Activated B cell treated with CpG ODN at 0.5 μM for 24 hours (primary cell): ENCODE measurements at regions of chr4 and their contacts with region 1.

Region 1: GRCh38 chr4:48779998-48780742 is at the start of gene FRYL:
- DNase-seq: peak; percentile 86
- ATAC-seq: peak; percentile 91
- H3K4me3 Mint-ChIP-seq: peak within 1 kb of the TSS; percentile 94
- H3K27ac Mint-ChIP-seq: peak within 1 kb of the TSS; percentile 87
- H3K4me1 Mint-ChIP-seq: peaks cover 41% of the 10 kb centered on the region
- H3K27me3 Mint-ChIP-seq: no peaks in the 10 kb centered on the region
- CTCF ChIP-seq: no peak
- total RNA-seq, gene FRYL: 82.4 and 91.5 TPM in 2 replicates

Region 2: DNA sequence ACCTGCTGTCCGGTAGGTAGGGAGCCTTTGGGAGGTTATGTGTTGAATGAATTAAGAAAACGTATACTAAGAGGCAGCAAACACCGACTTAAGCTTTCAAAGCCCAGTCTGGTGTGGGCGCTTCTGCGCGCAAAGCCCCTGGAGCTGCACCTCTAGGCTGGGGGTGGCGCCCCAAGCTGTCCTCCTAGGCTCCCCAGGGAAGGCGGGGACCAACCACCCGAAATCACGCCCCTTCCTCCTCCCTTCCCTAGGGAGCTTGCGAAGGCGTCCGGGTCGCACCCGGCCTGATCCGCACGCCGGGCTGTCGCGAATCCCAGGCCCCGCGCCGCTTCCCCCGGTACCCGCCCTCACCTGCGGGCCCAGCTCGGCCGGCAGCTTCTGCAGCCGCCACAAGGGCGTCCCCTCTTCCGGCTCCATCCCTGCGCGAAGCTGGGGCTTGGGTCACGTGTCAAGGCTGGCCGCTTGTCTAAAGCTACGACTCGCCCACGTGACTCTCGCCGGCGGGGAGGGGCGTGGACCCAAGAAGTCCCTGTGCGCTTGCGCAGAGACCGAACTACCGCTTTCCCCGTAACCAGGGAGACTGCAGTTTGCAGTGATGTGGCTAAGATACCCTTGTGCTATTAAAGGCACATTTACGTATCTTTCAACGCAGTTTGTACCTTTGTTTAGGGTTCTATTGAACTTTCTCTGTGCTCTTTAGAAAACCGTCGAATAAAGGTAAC is 1316.8 kb before region 1 on chr4 and contains the start of gene COMMD8:
- CTCF ChIA-PET with region 1: no interaction called
- POLR2A ChIA-PET with region 1: no interaction called
- intact Hi-C with region 1: loop called (anchors 5 kb)
- DNase-seq: peak; percentile 94
- ATAC-seq: peak; percentile 79
- H3K4me3 Mint-ChIP-seq: peak within 1 kb of the TSS; percentile 90
- H3K27ac Mint-ChIP-seq: peak within 1 kb of the TSS; percentile 92
- H3K4me1 Mint-ChIP-seq: peaks cover 57% of the 10 kb centered on the region
- H3K27me3 Mint-ChIP-seq: no peaks in the 10 kb centered on the region
- CTCF ChIP-seq: no peak
- total RNA-seq, gene COMMD8: 23.6 and 23.9 TPM in 2 replicates

Region 3: GRCh38 chr4:48033825-48034413 is 746.3 kb before region 1 on chr4:
- CTCF ChIA-PET with region 1: no interaction called
- POLR2A ChIA-PET with region 1: no interaction called
- intact Hi-C with region 1: loop called (anchors 2 kb)
- DNase-seq: no peak
- ATAC-seq: peak; percentile 69
- H3K4me3 Mint-ChIP-seq: no peak overlapping the region
- H3K27ac Mint-ChIP-seq: peak overlapping the region; percentile 36
- H3K4me1 Mint-ChIP-seq: peaks cover 46% of the 10 kb centered on the region
- H3K27me3 Mint-ChIP-seq: peaks cover 2% of the 10 kb centered on the region
- CTCF ChIP-seq: peak; percentile 23

Region 4: DNA sequence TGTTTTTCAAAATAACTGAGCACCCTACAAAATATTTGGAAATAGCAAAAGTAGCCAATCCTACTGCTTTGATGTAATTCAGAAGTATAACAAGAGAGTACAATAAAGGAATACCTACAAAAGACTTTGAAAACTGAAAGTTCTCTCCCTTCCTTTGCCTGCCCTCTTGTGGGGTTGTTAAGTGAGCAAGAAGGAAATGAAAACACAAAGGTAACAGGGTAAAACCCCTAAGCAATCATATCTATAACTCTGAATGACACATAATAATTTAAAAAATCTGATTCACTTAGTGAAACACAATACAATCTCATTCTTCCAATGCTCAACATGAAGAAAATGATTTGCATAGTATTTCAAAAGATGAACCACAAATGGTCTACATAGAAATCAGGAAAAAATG is 98.3 kb before region 1 on chr4:
- CTCF ChIA-PET with region 1: no interaction called
- POLR2A ChIA-PET with region 1: no interaction called
- intact Hi-C with region 1: loop called (anchors 5 kb)
- DNase-seq: no peak
- ATAC-seq: peak; percentile 84
- H3K4me3 Mint-ChIP-seq: peak overlapping the region; percentile 24
- H3K27ac Mint-ChIP-seq: peak overlapping the region; percentile 78
- H3K4me1 Mint-ChIP-seq: peaks cover 44% of the 10 kb centered on the region
- H3K27me3 Mint-ChIP-seq: no peaks in the 10 kb centered on the region
- CTCF ChIP-seq: no peak

Region 5: DNA sequence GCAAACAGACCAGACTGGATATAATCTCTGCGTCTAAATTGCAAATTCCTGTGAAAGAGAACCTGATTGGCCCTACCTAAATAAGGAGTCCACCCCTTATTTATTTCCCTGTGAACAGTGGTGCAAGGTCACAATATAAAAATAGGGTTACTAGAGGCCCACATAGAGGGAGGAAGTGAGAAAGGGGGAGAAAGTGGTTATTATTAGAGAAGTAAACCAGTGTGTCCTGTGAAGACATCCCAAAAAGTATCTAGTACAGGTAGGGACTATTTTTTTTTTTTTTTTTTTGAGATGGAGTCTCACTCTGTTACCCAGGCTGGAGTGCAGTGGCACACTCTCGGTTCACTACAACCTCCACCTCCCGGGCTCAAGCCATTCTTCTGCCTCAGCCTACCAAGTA is 14.9 kb after region 1 on chr4:
- CTCF ChIA-PET with region 1: interaction called, 4 read pairs
- POLR2A ChIA-PET with region 1: interaction called, 12 read pairs
- intact Hi-C with region 1: no loop called
- DNase-seq: no peak
- ATAC-seq: no peak
- H3K4me3 Mint-ChIP-seq: peak overlapping the region; percentile 17
- H3K27ac Mint-ChIP-seq: peak overlapping the region; percentile 12
- H3K4me1 Mint-ChIP-seq: peaks cover 41% of the 10 kb centered on the region
- H3K27me3 Mint-ChIP-seq: no peaks in the 10 kb centered on the region
- CTCF ChIP-seq: no peak

Region 6: DNA sequence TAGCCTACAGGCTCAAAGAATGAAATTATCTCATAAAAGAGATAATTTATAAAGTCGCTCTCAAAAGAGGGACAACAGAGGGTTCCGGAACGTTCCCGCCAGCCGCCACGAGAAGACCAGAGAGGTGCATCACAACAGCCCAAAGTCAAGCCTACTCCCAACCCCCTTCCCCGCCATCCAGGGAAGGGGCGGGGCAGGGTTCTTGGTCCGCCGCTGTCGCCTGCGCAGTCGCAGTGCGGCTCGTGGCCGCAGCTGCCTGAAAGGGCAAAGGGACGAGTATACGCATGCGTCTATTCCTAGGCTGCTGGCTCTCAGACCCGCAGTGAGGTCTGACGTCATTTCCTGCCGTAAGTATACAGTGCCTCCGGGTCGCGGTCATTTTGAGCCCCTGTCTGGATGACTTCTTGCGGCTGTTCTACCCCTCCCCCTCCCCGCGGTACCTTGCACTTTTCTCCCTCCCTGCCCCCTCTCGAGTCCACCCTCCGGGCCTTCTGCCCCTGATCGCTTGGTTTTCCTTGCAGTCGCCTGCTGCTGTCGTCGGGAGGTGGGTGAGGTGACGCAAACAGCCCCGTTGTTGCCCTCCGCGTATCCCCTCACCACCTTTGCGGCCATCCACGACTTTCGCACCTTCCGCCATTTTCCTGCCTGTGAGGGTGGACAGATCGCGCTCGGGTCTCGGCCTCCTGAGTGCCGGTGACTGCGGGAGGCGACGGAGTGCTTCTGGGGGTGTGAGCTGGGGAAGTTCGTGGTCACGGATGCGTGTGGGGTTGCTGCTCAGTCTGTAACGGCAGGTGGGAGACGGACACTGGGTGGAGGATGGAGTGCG is 50.7 kb after region 1 on chr4 and contains the start of gene OCIAD1:
- CTCF ChIA-PET with region 1: no interaction called
- POLR2A ChIA-PET with region 1: interaction called, 38 read pairs
- intact Hi-C with region 1: loop called (anchors 1 kb)
- DNase-seq: peak; percentile 82
- ATAC-seq: peak; percentile 94
- H3K4me3 Mint-ChIP-seq: peak within 1 kb of the TSS; percentile 100
- H3K27ac Mint-ChIP-seq: peak within 1 kb of the TSS; percentile 100
- H3K4me1 Mint-ChIP-seq: peaks cover 28% of the 10 kb centered on the region
- H3K27me3 Mint-ChIP-seq: no peaks in the 10 kb centered on the region
- CTCF ChIP-seq: no peak
- total RNA-seq, gene OCIAD1: 100 and 104 TPM in 2 replicates

Region 7: GRCh38 chr4:48963042-48963679 is 183.0 kb after region 1 on chr4:
- CTCF ChIA-PET with region 1: no interaction called
- POLR2A ChIA-PET with region 1: no interaction called
- intact Hi-C with region 1: loop called (anchors 2 kb)
- DNase-seq: peak; percentile 22
- ATAC-seq: peak; percentile 92
- H3K4me3 Mint-ChIP-seq: no peak overlapping the region
- H3K27ac Mint-ChIP-seq: no peak overlapping the region
- H3K4me1 Mint-ChIP-seq: no peaks in the 10 kb centered on the region
- H3K27me3 Mint-ChIP-seq: peaks cover 6% of the 10 kb centered on the region
- CTCF ChIP-seq: peak; percentile 94